Mammary epithelial cell (primary cell): ENCODE measurements at regions of chrX and their contacts with region 1.

Region 1: DNA sequence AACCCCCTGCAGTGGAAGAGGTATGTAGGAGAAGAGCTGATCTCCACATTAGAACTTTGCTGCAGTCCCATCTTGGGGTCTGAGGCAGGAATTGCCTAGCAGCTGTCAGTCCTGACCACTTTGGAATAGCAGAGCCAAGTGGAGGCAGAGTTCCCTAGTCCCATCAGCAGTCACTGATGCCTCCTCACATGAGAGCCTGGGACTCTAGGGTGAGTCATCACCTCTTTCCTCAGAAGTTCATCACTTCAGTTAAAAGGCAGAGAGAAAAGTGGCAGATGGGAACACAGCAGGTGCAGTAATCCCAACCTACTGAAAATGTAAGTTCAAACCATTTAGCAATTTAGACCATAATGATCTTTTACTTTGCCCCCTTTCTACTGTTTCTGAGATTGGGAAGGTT is 73.9 kb upstream of the MED14 start:
- DNase-seq: peak; percentile 8
- H3K4me3 ChIP-seq: no peak overlapping the region
- H3K27ac ChIP-seq: no peak overlapping the region
- H3K4me1 ChIP-seq: no peaks in the 10 kb centered on the region
- H3K27me3 ChIP-seq: no peaks in the 10 kb centered on the region
- CTCF ChIP-seq: no peak

Region 2: GRCh38 chrX:40749681-40750494 is 59.3 kb before region 1 on chrX:
- CTCF ChIA-PET with region 1: no interaction called
- dilution Hi-C with region 1: loop called (anchors 5 kb)
- in situ Hi-C with region 1: no loop called
- intact Hi-C with region 1: no loop called
- DNase-seq: no peak
- H3K4me3 ChIP-seq: no peak overlapping the region
- H3K27ac ChIP-seq: no peak overlapping the region
- H3K4me1 ChIP-seq: no peaks in the 10 kb centered on the region
- H3K27me3 ChIP-seq: peaks cover 9% of the 10 kb centered on the region
- CTCF ChIP-seq: no peak

Region 3: DNA sequence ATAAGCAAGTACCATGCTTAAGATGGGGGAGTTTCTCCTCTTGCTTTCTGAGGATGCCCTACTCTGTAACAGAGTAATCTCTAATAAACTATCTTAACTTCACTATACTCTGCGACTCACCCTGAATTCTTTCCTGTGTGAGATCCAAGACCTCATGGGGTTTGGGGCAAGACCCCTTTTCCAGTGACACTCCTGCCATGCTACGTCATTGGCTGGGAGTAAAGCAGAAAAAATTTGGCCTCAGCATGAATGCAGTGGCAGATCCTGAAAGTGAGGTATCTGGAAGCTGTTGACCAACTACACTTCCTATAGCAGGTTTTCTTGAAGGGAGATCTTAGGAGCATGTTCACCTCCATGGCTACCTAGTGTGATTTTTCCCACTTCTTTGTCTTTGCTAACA is 35.3 kb after region 1 on chrX:
- CTCF ChIA-PET with region 1: no interaction called
- dilution Hi-C with region 1: loop called (anchors 5 kb)
- in situ Hi-C with region 1: no loop called
- intact Hi-C with region 1: no loop called
- DNase-seq: no peak
- H3K4me3 ChIP-seq: no peak overlapping the region
- H3K27ac ChIP-seq: no peak overlapping the region
- H3K4me1 ChIP-seq: peaks cover 4% of the 10 kb centered on the region
- H3K27me3 ChIP-seq: peaks cover 2% of the 10 kb centered on the region
- CTCF ChIP-seq: no peak